ENCODE measurements at regions of chr2 and their contacts with region 1.

Region 1: GRCh38 chr2:36785179-36785795 is 88.8 kb downstream of the VIT start:
- DNase-seq: peak; percentile 73 to 76 (median 76)
- ATAC-seq: peak; percentile 84
- H3K4me3 ChIP-seq: no peak overlapping the region
- H3K27ac ChIP-seq: no peak overlapping the region
- H3K4me1 ChIP-seq: no peaks in the 10 kb centered on the region; a peak in 2 of 5 replicates
- H3K27me3 ChIP-seq: peaks cover 25 to 28% of the 10 kb centered on the region in 2 experiments; a peak in 4 of 5 replicates
- CTCF ChIP-seq: peak; percentile 85 to 92 (median 91)
- EP300 ChIP-seq: no peak
- POLR2A ChIP-seq: no peak
- RAD21 ChIP-seq: peak; percentile 63 to 74

Region 2: DNA sequence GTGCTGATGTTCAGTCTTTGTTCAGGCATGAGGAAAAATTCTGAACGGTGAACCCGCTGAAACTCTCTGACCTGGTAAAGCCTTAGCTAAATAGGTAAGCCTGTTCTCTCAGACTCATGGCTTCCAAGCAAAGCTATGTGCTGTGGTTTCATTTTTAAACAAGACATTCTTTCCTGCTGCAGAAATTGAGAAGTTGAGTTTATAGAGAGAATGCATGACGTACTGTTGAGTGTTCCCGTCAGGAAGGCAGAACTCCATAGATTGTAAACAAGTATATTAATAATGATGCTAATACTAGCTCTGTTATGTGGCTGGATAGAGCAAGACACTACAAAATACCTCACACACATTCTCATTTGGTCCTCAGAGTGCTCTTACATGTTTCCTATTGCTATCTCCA is 853.7 kb before region 1 on chr2:
- CTCF ChIA-PET with region 1: no interaction called
- POLR2A ChIA-PET with region 1: no interaction called
- in situ Hi-C with region 1: no loop called
- intact Hi-C with region 1: no loop called
- DNase-seq: no peak
- ATAC-seq: no peak
- H3K4me3 ChIP-seq: no peak overlapping the region
- H3K27ac ChIP-seq: no peak overlapping the region
- H3K4me1 ChIP-seq: no peaks in the 10 kb centered on the region
- H3K27me3 ChIP-seq: no peaks in the 10 kb centered on the region
- CTCF ChIP-seq: no peak
- EP300 ChIP-seq: no peak
- POLR2A ChIP-seq: no peak
- RAD21 ChIP-seq: no peak

Region 3: DNA sequence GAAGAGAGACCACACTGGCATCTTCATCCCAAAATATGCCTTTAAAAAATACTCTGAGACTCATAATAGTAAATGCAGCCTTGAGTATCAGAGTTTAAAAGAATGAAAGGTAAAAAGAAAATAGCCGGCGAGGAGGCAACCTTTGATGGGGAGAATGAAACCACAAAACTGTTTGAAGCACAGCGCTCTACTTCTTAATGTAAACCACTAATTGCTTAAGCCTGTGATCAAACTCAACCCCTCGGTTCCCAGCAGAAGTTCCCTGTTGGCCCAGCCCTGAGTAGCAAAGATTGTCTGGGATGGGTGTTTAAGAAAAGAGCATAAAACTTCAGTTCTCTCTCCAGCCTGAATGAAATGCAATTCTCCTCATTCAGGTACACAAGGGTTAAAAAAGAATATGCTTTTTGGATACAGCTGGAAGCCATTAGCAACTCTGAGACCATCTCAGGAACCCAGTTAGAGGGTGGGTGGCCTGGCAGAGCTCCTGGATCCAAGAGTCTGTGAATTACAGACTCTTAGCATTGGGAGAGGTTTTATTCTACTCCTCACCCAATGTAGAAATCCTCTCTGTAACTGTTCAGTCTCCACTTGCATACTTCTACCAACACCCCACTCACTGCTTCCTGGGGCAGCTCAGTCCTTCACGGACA is 44.0 kb before region 1 on chr2:
- CTCF ChIA-PET with region 1: no interaction called
- POLR2A ChIA-PET with region 1: no interaction called
- in situ Hi-C with region 1: no loop called
- intact Hi-C with region 1: no loop called
- DNase-seq: no peak
- ATAC-seq: no peak
- H3K4me3 ChIP-seq: no peak overlapping the region
- H3K27ac ChIP-seq: no peak overlapping the region
- H3K4me1 ChIP-seq: no peaks in the 10 kb centered on the region
- H3K27me3 ChIP-seq: no peaks in the 10 kb centered on the region; a peak in 1 of 5 replicates
- CTCF ChIP-seq: no peak
- EP300 ChIP-seq: no peak
- POLR2A ChIP-seq: no peak
- RAD21 ChIP-seq: no peak

Region 4: GRCh38 chr2:36807223-36807900 is 22.1 kb after region 1 on chr2:
- CTCF ChIA-PET with region 1: no interaction called
- POLR2A ChIA-PET with region 1: no interaction called
- in situ Hi-C with region 1: no loop called
- intact Hi-C with region 1: no loop called
- DNase-seq: peak in 2 of 4 experiments; percentile 22 to 49
- ATAC-seq: peak; percentile 57
- H3K4me3 ChIP-seq: no peak overlapping the region
- H3K27ac ChIP-seq: no peak overlapping the region
- H3K4me1 ChIP-seq: peaks cover 4 to 7% of the 10 kb centered on the region in 2 experiments; a peak in 2 of 5 replicates
- H3K27me3 ChIP-seq: peaks cover 0 to 8% of the 10 kb centered on the region in 2 experiments; a peak in 2 of 5 replicates
- CTCF ChIP-seq: no peak
- EP300 ChIP-seq: no peak
- POLR2A ChIP-seq: no peak
- RAD21 ChIP-seq: no peak

Region 5: GRCh38 chr2:36918307-36918706 is 133.0 kb after region 1 on chr2:
- CTCF ChIA-PET with region 1: no interaction called
- POLR2A ChIA-PET with region 1: no interaction called
- in situ Hi-C with region 1: no loop called
- intact Hi-C with region 1: loop called (anchors 5 kb)
- DNase-seq: no peak
- ATAC-seq: no peak
- H3K4me3 ChIP-seq: no peak overlapping the region
- H3K27ac ChIP-seq: no peak overlapping the region
- H3K4me1 ChIP-seq: no peaks in the 10 kb centered on the region
- H3K27me3 ChIP-seq: no peaks in the 10 kb centered on the region
- CTCF ChIP-seq: peak in 2 of 3 experiments; percentile 12 to 41; a peak in 2 of 6 replicates
- EP300 ChIP-seq: no peak
- POLR2A ChIP-seq: no peak
- RAD21 ChIP-seq: no peak

Region 6: DNA sequence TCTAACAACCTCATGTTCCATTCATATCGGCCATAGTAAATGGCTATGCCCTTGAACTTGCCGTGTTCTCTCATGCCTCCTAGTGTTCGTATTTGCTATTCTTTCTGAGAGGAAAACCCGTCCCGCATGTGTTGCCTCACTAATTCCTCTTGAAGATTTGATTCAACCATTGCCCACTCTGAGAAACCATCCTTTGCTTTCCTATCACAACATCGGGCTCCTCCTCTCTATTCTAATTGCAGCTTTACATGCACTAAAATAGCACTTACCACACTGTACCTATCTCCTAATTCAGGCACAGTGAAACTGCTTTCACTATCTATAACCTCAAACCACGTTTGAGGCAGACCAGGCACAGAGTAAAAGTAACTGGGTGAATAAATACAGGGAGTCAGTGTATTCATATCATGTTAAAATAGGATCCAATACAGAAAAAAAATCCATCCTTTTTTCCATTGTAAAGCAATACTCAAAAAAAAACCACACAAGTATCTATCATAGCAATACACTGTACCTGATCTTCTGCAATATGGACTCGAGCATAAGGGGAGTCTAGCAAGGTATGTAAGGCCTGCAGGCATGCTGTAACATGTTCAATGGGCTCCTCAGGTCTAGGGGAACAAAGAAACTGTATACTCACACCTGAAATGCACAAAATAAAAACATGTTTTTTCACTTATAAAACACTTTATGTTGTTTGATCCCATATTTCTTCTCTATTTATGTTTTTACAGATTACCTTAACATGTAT is 220.0 kb after region 1 on chr2:
- CTCF ChIA-PET with region 1: interaction called, 13 read pairs
- POLR2A ChIA-PET with region 1: no interaction called
- in situ Hi-C with region 1: loop called (anchors 5 kb)
- intact Hi-C with region 1: loop called (anchors 1 kb)
- DNase-seq: peak in 3 of 4 experiments; percentile 12 to 59 (median 15)
- ATAC-seq: peak; percentile 97
- H3K4me3 ChIP-seq: no peak overlapping the region
- H3K27ac ChIP-seq: no peak overlapping the region
- H3K4me1 ChIP-seq: peaks cover 0 to 2% of the 10 kb centered on the region in 2 experiments; a peak in 1 of 5 replicates
- H3K27me3 ChIP-seq: no peaks in the 10 kb centered on the region
- CTCF ChIP-seq: peak; percentile 70 to 82 (median 74)
- EP300 ChIP-seq: no peak
- POLR2A ChIP-seq: no peak
- RAD21 ChIP-seq: peak; percentile 76 to 91

Region 7: DNA sequence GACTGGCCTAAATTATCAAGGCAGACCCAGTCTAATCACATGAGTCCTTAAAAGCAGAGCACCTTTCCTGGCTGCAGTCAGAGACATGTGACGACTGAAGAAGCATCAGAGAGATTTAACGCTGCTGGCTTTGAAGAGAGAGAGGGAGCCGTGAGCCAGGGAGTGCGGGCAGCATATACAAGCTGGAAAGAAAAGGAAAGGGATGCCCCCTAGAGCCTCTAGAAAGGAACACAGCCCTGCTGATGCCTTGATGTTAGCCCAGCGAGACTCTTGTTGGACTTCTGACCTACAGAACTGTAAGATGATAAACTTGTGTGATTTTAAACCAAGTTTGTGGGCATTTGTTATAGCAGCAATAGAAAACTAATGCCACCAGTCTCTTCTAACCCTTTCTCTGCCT is 240.8 kb after region 1 on chr2:
- CTCF ChIA-PET with region 1: no interaction called
- POLR2A ChIA-PET with region 1: no interaction called
- in situ Hi-C with region 1: no loop called
- intact Hi-C with region 1: loop called (anchors 1 kb)
- DNase-seq: peak in 2 of 4 experiments; percentile 38 to 55
- ATAC-seq: peak; percentile 99
- H3K4me3 ChIP-seq: no peak overlapping the region
- H3K27ac ChIP-seq: no peak overlapping the region
- H3K4me1 ChIP-seq: no peaks in the 10 kb centered on the region
- H3K27me3 ChIP-seq: no peaks in the 10 kb centered on the region
- CTCF ChIP-seq: peak; percentile 56 to 66 (median 58)
- EP300 ChIP-seq: no peak
- POLR2A ChIP-seq: no peak
- RAD21 ChIP-seq: peak in 1 of 2 experiments; percentile 68; a peak in 2 of 4 replicates

Region 8: GRCh38 chr2:37110306-37111212 is 325.3 kb after region 1 on chr2:
- CTCF ChIA-PET with region 1: no interaction called
- POLR2A ChIA-PET with region 1: no interaction called
- in situ Hi-C with region 1: no loop called
- intact Hi-C with region 1: no loop called
- DNase-seq: no peak
- ATAC-seq: no peak
- H3K4me3 ChIP-seq: no peak overlapping the region
- H3K27ac ChIP-seq: no peak overlapping the region
- H3K4me1 ChIP-seq: no peaks in the 10 kb centered on the region
- H3K27me3 ChIP-seq: no peaks in the 10 kb centered on the region
- CTCF ChIP-seq: no peak
- EP300 ChIP-seq: no peak
- POLR2A ChIP-seq: no peak
- RAD21 ChIP-seq: no peak

Region 9: DNA sequence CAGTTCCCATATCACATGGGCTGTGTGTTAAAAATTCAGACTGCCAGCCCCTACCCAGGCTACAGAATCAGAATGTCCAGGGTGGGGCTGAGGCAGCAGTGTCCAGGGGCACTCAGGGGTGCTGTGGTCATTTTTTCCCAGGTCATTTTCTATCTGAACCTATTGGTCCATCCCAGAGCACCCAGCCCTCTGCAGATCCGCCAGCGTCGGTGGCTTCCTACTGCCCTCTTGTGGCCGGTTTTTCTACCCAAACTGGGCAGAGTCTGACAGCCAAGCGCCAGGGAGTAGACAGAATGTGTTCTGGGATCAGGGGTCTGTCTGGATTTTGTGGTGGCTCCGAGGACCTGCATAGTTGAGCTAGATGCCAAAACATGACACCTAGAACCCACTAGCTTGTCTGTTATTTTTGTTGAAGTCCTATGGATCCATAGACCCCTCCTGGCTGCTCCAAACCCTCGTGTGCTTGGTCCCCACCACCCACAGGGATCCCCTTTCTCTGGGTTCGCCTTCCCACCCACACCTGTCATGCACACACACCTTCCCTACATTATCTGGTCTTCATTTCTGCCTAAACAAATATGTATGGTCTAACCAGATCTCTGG is 1105.7 kb after region 1 on chr2:
- CTCF ChIA-PET with region 1: no interaction called
- POLR2A ChIA-PET with region 1: no interaction called
- in situ Hi-C with region 1: loop called (anchors 25 kb)
- intact Hi-C with region 1: no loop called
- DNase-seq: peak; percentile 65 to 76 (median 70)
- ATAC-seq: peak; percentile 100
- H3K4me3 ChIP-seq: no peak overlapping the region
- H3K27ac ChIP-seq: no peak overlapping the region
- H3K4me1 ChIP-seq: no peaks in the 10 kb centered on the region
- H3K27me3 ChIP-seq: peaks cover 0 to 9% of the 10 kb centered on the region in 2 experiments; a peak in 2 of 5 replicates
- CTCF ChIP-seq: peak; percentile 81 to 86 (median 82)
- EP300 ChIP-seq: no peak
- POLR2A ChIP-seq: no peak
- RAD21 ChIP-seq: peak; percentile 67 to 82

Measured in K562 (cell line).